Mammary epithelial cell (primary cell): ENCODE measurements at regions of chr3 and their contacts with region 1.

Region 1: GRCh38 chr3:64717872-64718613 is 30.2 kb upstream of the ADAMTS9 start:
- DNase-seq: no peak
- H3K4me3 ChIP-seq: no peak overlapping the region
- H3K27ac ChIP-seq: no peak overlapping the region
- H3K4me1 ChIP-seq: no peaks in the 10 kb centered on the region
- H3K27me3 ChIP-seq: no peaks in the 10 kb centered on the region
- CTCF ChIP-seq: peak; percentile 48 to 51

Region 2: GRCh38 chr3:64475037-64475436 is 243.0 kb before region 1 on chr3:
- CTCF ChIA-PET with region 1: no interaction called
- dilution Hi-C with region 1: no loop called
- in situ Hi-C with region 1: no loop called
- intact Hi-C with region 1: no loop called
- DNase-seq: no peak
- H3K4me3 ChIP-seq: no peak overlapping the region
- H3K27ac ChIP-seq: no peak overlapping the region
- H3K4me1 ChIP-seq: no peaks in the 10 kb centered on the region
- H3K27me3 ChIP-seq: no peaks in the 10 kb centered on the region
- CTCF ChIP-seq: no peak

Region 3: GRCh38 chr3:65170390-65171042 is 452.5 kb after region 1 on chr3:
- CTCF ChIA-PET with region 1: no interaction called
- dilution Hi-C with region 1: no loop called
- in situ Hi-C with region 1: no loop called
- intact Hi-C with region 1: loop called (anchors 2 kb)
- DNase-seq: peak; percentile 82
- H3K4me3 ChIP-seq: no peak overlapping the region
- H3K27ac ChIP-seq: peak overlapping the region; percentile 39
- H3K4me1 ChIP-seq: peaks cover 5% of the 10 kb centered on the region
- H3K27me3 ChIP-seq: no peaks in the 10 kb centered on the region
- CTCF ChIP-seq: peak; percentile 24 to 58

Region 4: DNA sequence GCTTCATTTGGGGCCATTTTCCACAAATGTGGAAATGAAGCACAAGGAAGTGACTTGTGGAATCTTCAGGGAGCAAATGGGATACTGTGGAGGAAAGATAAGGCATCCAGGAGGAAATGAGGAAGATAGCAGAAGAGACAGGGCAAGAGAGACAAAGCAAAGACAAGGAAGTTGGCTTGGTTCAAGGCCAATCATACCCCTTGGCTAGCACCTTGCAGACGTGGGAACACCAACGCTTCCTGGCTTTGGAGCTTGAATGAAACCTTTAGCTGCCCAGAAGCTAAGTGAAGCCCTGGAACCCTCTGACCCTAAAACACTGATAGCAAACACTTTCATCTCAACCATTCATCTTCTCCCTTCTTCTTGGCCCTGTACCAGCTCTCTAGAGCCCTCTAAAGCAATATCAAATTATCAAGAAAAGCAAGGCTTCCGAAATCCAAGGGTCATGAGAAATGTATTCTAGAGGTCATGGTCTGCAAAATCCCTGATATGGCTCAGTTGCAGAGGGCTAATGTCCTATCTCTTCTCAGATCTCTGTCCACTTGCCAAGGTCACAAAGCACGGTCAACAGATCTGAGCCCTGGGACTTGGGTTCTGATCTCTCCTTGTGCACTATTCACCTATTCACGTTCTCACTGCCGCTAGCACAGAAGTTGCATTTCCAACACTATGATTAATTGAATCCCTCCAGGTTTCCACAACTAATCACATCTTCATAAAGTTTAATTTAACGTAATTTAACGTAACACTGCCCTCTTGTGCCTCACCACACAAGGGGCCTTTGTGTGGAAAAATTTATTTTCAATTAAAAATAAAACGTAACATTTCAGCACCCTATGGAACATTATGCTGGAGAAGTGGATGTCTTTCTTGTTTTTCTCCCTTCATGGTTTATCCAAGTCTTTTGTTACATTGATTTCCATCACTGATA is 527.4 kb after region 1 on chr3:
- CTCF ChIA-PET with region 1: no interaction called
- dilution Hi-C with region 1: no loop called
- in situ Hi-C with region 1: no loop called
- intact Hi-C with region 1: loop called (anchors 1 kb)
- DNase-seq: peak; percentile 18
- H3K4me3 ChIP-seq: no peak overlapping the region
- H3K27ac ChIP-seq: no peak overlapping the region
- H3K4me1 ChIP-seq: no peaks in the 10 kb centered on the region
- H3K27me3 ChIP-seq: peaks cover 2% of the 10 kb centered on the region
- CTCF ChIP-seq: peak; percentile 52 to 53